Posterior vena cava (tissue), 2 donors: ENCODE measurements at regions of chr6 and their contacts with region 1.

Region 1: GRCh38 chr6:154675602-154676088 is 57.6 kb upstream of the SCAF8 start:
- DNase-seq: peak; percentile 93

Region 2: GRCh38 chr6:154432533-154433476 is 242.8 kb before region 1 on chr6:
- intact Hi-C with region 1: no loop called
- DNase-seq: no peak

Region 3: GRCh38 chr6:154615483-154616025 is 60.1 kb before region 1 on chr6:
- intact Hi-C with region 1: no loop called
- DNase-seq: no peak

Region 4: GRCh38 chr6:154805288-154805911 is 129.8 kb after region 1 on chr6:
- intact Hi-C with region 1: loop called (anchors 5 to 10 kb)
- DNase-seq: no peak

Region 5: GRCh38 chr6:154814063-154814462 is 138.4 kb after region 1 on chr6:
- intact Hi-C with region 1: loop called (anchors 5 to 10 kb)
- DNase-seq: no peak